ENCODE measurements at regions of chr19 and their contacts with region 1.

Region 1: DNA sequence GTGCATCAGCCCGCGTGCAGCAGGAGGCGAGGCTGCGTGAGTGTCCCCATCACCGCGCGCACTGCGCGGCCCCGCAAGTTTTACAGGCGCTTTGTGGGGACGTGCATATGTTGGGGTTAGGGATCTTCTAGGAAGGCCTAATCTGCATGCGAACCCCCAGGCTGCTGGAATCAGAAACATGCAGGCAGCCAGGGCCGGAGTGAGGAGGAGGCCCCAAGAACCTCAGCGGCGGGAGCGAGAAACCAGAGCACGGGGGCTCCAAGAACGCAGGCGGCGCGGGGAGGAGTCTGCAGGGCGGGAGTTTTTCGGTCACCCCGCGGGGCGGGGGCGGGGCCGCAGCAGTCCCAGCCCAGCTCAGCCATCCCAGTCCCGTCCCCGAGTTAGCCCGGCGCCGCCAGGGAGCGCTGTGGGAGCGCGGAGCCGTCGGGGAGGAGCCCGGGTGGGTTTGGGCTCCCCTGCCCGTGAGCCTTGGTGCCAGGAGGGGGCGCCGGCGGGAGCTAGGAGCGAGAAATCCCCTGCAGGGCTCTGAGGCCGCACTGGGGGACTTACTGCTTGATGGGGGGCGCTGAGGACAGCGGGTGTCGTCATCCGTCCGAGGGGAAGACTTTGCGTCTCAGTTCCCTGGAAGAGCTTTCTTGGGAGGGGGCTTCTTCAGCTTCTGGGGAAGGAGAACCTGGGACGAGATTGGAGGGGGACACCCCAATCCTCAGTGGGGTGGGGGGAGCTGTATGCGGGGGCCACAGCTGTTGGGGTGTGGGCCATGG is 933 bp upstream of the NRTN start:
- H3K4me3 Mint-ChIP-seq: peak overlapping the region; percentile 78
- H3K27ac Mint-ChIP-seq: peak overlapping the region; percentile 55
- H3K4me1 Mint-ChIP-seq: peaks cover 24% of the 10 kb centered on the region
- H3K27me3 Mint-ChIP-seq: peaks cover 85% of the 10 kb centered on the region

Region 2: GRCh38 chr19:5891938-5892771 is 88.2 kb after region 1 on chr19:
- intact Hi-C with region 1: loop called (anchors 2 kb)
- H3K4me3 Mint-ChIP-seq: no peak overlapping the region
- H3K27ac Mint-ChIP-seq: no peak overlapping the region
- H3K4me1 Mint-ChIP-seq: peaks cover 5% of the 10 kb centered on the region
- H3K27me3 Mint-ChIP-seq: peaks cover 40% of the 10 kb centered on the region